ENCODE measurements at regions of chr20 and their contacts with region 1.

Region 1: GRCh38 chr20:9348747-9349146 is 165.6 kb upstream of the LAMP5 start:
- DNase-seq: no peak
- ATAC-seq: no peak
- H3K4me3 ChIP-seq: no peak overlapping the region
- H3K4me1 ChIP-seq: no peaks in the 10 kb centered on the region
- CTCF ChIP-seq: no peak

Region 2: DNA sequence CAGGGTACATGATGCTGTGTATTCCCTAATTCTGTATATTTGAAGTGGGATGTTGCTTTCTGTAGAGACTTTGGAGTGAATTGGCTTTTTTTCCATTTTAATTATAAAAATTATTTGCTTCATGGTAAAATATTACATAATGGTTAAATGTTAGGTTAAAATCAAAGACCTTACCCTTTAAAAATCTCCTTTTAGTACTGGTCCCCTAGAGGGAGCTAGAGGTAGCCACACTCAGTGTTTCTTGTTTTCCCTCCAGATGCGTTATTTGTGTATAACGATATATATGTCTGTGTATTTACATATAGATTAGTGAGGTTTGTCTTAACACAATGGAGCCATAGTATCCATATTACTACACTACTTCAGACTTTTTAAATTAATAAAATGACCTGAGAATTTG is 133.2 kb before region 1 on chr20:
- intact Hi-C with region 1: loop called in 1 of 2 experiments (anchors 5 kb)
- DNase-seq: no peak
- ATAC-seq: peak; percentile 39
- H3K4me3 ChIP-seq: no peak overlapping the region
- H3K4me1 ChIP-seq: no peaks in the 10 kb centered on the region
- CTCF ChIP-seq: no peak

Region 3: DNA sequence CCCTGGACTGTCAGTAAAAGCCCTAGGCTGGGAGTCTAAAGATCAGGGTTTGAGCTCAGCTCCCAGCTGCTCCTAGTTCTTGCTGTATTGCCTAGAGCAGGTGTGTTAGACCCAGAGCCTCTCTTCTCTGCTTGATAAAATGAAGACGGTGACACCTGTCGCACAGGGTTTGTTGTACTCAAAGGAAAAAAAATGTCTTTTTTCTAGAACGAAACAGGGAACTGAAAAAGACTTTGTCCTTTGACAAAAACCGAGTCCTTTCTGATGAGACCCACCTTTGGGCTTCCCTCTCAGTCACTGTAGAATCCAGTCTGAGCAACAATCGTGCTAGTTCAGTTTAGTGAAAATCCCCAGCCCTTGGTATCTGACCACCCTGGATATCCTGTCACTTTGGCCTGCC is 63.6 kb after region 1 on chr20:
- intact Hi-C with region 1: no loop called
- DNase-seq: no peak
- ATAC-seq: no peak
- H3K4me3 ChIP-seq: no peak overlapping the region
- H3K4me1 ChIP-seq: no peaks in the 10 kb centered on the region
- CTCF ChIP-seq: no peak